MCF 10A (cell line): ENCODE measurements at regions of chr6 and their contacts with region 1.

Region 1: DNA sequence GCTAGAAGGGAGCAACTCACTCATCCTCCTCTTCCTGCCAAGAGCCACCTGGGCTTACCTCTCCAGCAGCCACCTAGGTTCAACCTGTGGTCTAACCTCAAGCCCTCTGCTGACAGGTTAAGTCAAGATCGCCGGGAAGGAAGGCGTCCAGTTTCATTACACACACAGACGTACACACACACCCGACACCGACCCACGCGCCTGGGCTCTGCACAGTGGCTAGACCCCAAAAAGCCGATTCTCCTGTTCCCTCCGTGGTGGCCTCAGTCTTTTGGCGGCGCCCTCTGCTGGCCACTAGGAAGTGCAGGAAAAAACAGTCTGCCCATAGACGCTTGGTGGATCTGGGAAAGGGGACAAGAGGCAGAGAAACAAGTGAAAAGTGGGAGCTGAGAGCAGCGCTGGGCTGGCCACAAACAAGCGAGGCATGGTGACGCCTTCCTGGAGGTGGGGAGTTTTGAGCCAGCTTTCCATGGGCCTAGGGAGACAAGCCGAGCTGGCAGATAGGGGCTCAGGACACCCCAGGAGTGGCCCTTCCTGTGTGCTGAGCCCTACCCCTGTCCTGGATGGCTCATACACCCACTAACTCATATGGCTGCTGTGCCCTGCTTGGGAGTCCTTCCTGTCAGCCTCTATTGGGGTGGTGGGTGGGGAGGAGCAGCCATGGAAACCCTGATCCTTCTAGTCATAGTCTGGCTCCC is 52.7 kb downstream of the MRPL14 start:
- DNase-seq: peak; percentile 82
- H3K4me3 Mint-ChIP-seq: peak overlapping the region; percentile 71
- H3K27ac Mint-ChIP-seq: no peak overlapping the region
- H3K4me1 Mint-ChIP-seq: peaks cover 25% of the 10 kb centered on the region
- H3K27me3 Mint-ChIP-seq: no peaks in the 10 kb centered on the region
- CTCF ChIP-seq: peak; percentile 84

Region 2: GRCh38 chr6:43856005-43856765 is 218.4 kb before region 1 on chr6:
- CTCF ChIA-PET with region 1: interaction called, 3 read pairs
- POLR2A ChIA-PET with region 1: no interaction called
- intact Hi-C with region 1: loop called (anchors 5 kb)
- DNase-seq: peak; percentile 60
- H3K4me3 Mint-ChIP-seq: no peak overlapping the region
- H3K27ac Mint-ChIP-seq: no peak overlapping the region
- H3K4me1 Mint-ChIP-seq: peaks cover 4% of the 10 kb centered on the region
- H3K27me3 Mint-ChIP-seq: no peaks in the 10 kb centered on the region
- CTCF ChIP-seq: peak; percentile 18

Region 3: GRCh38 chr6:43972913-43973300 is 101.7 kb before region 1 on chr6:
- CTCF ChIA-PET with region 1: interaction called, 12 read pairs
- POLR2A ChIA-PET with region 1: interaction called, 8 read pairs
- intact Hi-C with region 1: loop called (anchors 2 kb)
- DNase-seq: peak; percentile 92
- H3K4me3 Mint-ChIP-seq: peak overlapping the region; percentile 52
- H3K27ac Mint-ChIP-seq: peak overlapping the region; percentile 80
- H3K4me1 Mint-ChIP-seq: peaks cover 41% of the 10 kb centered on the region
- H3K27me3 Mint-ChIP-seq: no peaks in the 10 kb centered on the region
- CTCF ChIP-seq: no peak

Region 4: GRCh38 chr6:44058617-44059358 is 15.8 kb before region 1 on chr6:
- CTCF ChIA-PET with region 1: interaction called, 32 read pairs
- POLR2A ChIA-PET with region 1: interaction called, 15 read pairs
- intact Hi-C with region 1: no loop called
- DNase-seq: peak; percentile 99
- H3K4me3 Mint-ChIP-seq: peak overlapping the region; percentile 58
- H3K27ac Mint-ChIP-seq: peak overlapping the region; percentile 93
- H3K4me1 Mint-ChIP-seq: peaks cover 66% of the 10 kb centered on the region
- H3K27me3 Mint-ChIP-seq: no peaks in the 10 kb centered on the region
- CTCF ChIP-seq: no peak